ENCODE measurements at regions of chrX and their contacts with region 1.

Region 1: GRCh38 chrX:39204945-39205344 is 403.7 kb downstream of the MID1IP1 start:
- DNase-seq: peak; percentile 75
- ATAC-seq: peak; percentile 90
- H3K4me3 Mint-ChIP-seq: peak overlapping the region; percentile 21
- H3K27ac Mint-ChIP-seq: peak overlapping the region; percentile 83
- H3K4me1 Mint-ChIP-seq: peaks cover 55% of the 10 kb centered on the region
- H3K27me3 Mint-ChIP-seq: no peaks in the 10 kb centered on the region

Region 2: DNA sequence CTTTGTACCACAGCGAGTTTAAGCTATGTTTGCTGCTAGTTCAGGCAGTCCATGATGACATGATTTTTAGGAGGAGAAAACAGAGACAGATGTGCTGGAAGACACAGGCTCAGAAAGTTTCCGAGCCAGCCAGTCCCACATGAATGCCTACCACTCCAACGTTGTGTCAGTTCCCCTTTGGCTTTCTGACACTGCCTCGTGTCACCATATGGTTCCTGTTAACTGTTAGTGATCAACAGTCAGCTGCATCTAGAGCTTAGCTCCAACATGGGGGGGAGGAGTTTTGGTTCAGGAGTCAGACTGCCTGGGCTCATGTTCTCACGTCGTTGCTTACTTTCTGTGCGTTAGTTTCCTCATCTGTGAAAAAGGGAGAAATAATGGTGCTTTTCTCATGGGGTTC is 60.0 kb before region 1 on chrX:
- CTCF ChIA-PET with region 1: no interaction called
- POLR2A ChIA-PET with region 1: no interaction called
- intact Hi-C with region 1: no loop called
- DNase-seq: no peak
- ATAC-seq: no peak
- H3K4me3 Mint-ChIP-seq: no peak overlapping the region
- H3K27ac Mint-ChIP-seq: no peak overlapping the region
- H3K4me1 Mint-ChIP-seq: no peaks in the 10 kb centered on the region
- H3K27me3 Mint-ChIP-seq: no peaks in the 10 kb centered on the region

Region 3: GRCh38 chrX:39242187-39242586 is 37.2 kb after region 1 on chrX:
- CTCF ChIA-PET with region 1: no interaction called
- POLR2A ChIA-PET with region 1: no interaction called
- intact Hi-C with region 1: loop called (anchors 2 to 5 kb)
- DNase-seq: peak; percentile 13
- ATAC-seq: no peak
- H3K4me3 Mint-ChIP-seq: no peak overlapping the region
- H3K27ac Mint-ChIP-seq: no peak overlapping the region
- H3K4me1 Mint-ChIP-seq: peaks cover 29% of the 10 kb centered on the region
- H3K27me3 Mint-ChIP-seq: no peaks in the 10 kb centered on the region